Naive thymus-derived CD4-positive, alpha-beta T cell (primary cell): ENCODE measurements at regions of chr17 and their contacts with region 1.

Region 1: GRCh38 chr17:3668279-3669085 is at the starts of genes EMC6 and TAX1BP3:
- DNase-seq: peak; percentile 97 to 100 (median 100)
- ATAC-seq: peak; percentile 96
- H3K4me3 ChIP-seq: peak within 1 kb of the TSS; percentile 91
- H3K4me3 Mint-ChIP-seq: peak within 1 kb of the TSS; percentile 82 to 94 (median 91)
- H3K27ac ChIP-seq: peak within 1 kb of the TSS; percentile 76
- H3K27ac Mint-ChIP-seq: peak within 1 kb of the TSS; percentile 63 to 93 (median 85)
- H3K4me1 ChIP-seq: peaks cover 8 to 17% of the 10 kb centered on the region in 2 donors
- H3K4me1 Mint-ChIP-seq: peaks cover 21 to 43% (median 30%) of the 10 kb centered on the region in 7 donors
- H3K27me3 ChIP-seq: no peaks in the 10 kb centered on the region
- H3K27me3 Mint-ChIP-seq: peaks cover 0 to 2% (median 0%) of the 10 kb centered on the region in 5 donors
- total RNA-seq, gene EMC6: 23.1 to 39.0 (median 31.2) TPM
- total RNA-seq, gene TAX1BP3: 10.5 to 28.4 (median 11.7) TPM

Region 2: DNA sequence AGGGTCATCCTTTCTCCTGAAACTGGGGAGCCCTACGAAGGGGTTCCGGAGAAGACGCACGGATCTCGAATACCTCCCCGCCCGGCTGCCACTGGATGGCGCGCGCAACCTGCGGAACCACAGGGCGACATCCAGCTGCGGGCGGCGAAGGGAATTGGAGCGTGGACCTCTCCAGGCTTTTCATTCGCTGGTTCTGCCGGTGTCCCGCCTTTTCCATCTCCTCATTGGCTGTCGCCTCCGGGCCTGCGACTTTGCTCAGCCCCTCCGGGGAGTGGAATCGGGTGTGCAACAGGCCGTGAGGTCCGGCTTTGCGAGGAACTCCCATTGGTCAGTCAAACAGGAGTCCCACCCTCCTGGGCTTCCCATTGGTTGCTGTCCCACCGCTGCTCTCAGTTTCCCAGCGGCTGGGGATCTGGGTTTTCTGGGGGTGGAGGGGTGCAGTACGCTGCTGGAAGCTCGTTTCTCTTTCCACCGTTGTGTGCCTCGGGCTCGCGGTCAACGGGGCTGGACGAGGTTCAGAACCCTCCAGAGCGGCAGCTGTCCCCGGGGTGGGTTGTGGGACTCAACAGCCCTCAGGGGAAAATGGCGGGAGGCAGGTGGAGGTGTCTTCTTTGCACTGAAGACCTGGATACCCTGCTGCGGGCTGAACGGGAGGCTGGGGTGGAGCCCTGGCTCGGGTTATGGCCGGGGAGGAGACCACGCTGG is 619.6 kb before region 1 on chr17:
- CTCF ChIA-PET with region 1: no interaction called
- POLR2A ChIA-PET with region 1: no interaction called
- intact Hi-C with region 1: loop called in 1 of 2 experiments (anchors 5 kb)
- DNase-seq: peak; percentile 76 to 95 (median 91)
- ATAC-seq: peak; percentile 98
- H3K4me3 ChIP-seq: peak overlapping the region; percentile 83
- H3K4me3 Mint-ChIP-seq: peak overlapping the region; percentile 86 to 94 (median 92)
- H3K27ac ChIP-seq: peak overlapping the region; percentile 60
- H3K27ac Mint-ChIP-seq: peak overlapping the region; percentile 46 to 91 (median 86)
- H3K4me1 ChIP-seq: peaks cover 0 to 6% of the 10 kb centered on the region in 2 donors
- H3K4me1 Mint-ChIP-seq: peaks cover 0 to 15% (median 9%) of the 10 kb centered on the region in 7 donors
- H3K27me3 ChIP-seq: no peaks in the 10 kb centered on the region
- H3K27me3 Mint-ChIP-seq: peaks cover 0 to 6% (median 0%) of the 10 kb centered on the region in 5 donors

Region 3: DNA sequence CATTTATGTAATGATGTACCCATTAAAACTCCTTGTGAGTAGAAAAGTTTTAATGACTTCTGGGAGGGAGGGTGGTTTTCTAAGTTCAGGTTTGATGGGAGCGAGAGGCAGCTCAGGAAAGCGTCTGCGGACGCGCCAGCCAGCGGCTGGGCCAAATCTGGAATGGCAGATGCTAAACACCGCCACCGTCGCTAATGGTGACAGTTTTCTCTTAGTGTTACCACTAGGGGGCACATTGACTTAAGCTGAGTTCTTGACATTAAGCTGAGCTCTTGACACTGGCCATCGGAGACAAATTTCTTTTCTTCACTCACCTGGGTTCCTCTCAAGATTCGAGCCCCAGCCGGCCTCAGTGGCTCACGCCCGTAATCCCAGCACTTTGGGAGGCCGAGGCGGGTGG is 66.0 kb before region 1 on chr17:
- CTCF ChIA-PET with region 1: no interaction called
- POLR2A ChIA-PET with region 1: no interaction called
- intact Hi-C with region 1: no loop called
- DNase-seq: peak in 2 of 9 donors; percentile 5 to 7
- ATAC-seq: no peak
- H3K4me3 ChIP-seq: no peak overlapping the region
- H3K4me3 Mint-ChIP-seq: no peak overlapping the region
- H3K27ac ChIP-seq: no peak overlapping the region
- H3K27ac Mint-ChIP-seq: no peak overlapping the region
- H3K4me1 ChIP-seq: no peaks in the 10 kb centered on the region
- H3K4me1 Mint-ChIP-seq: peaks cover 0 to 1% (median 0%) of the 10 kb centered on the region in 7 donors
- H3K27me3 ChIP-seq: no peaks in the 10 kb centered on the region
- H3K27me3 Mint-ChIP-seq: no peaks in the 10 kb centered on the region

Region 4: GRCh38 chr17:3695723-3696411 is 27.4 kb after region 1 on chr17 and contains the start of gene P2RX5:
- CTCF ChIA-PET with region 1: no interaction called
- POLR2A ChIA-PET with region 1: interaction called, 3 read pairs
- intact Hi-C with region 1: loop called in 1 of 2 experiments (anchors 1 kb)
- DNase-seq: peak in 8 of 9 donors; percentile 24 to 59 (median 35)
- ATAC-seq: peak; percentile 71
- H3K4me3 ChIP-seq: peak within 1 kb of the TSS; percentile 82
- H3K4me3 Mint-ChIP-seq: peak within 1 kb of the TSS; percentile 87 to 98 (median 94)
- H3K27ac ChIP-seq: peak within 1 kb of the TSS; percentile 61
- H3K27ac Mint-ChIP-seq: peak within 1 kb of the TSS in 8 of 9 donors; percentile 67 to 95 (median 86)
- H3K4me1 ChIP-seq: peaks cover 3 to 9% of the 10 kb centered on the region in 2 donors
- H3K4me1 Mint-ChIP-seq: peaks cover 5 to 39% (median 16%) of the 10 kb centered on the region in 7 donors
- H3K27me3 ChIP-seq: no peaks in the 10 kb centered on the region
- H3K27me3 Mint-ChIP-seq: no peaks in the 10 kb centered on the region
- total RNA-seq, gene P2RX5: 10.7 to 94.5 (median 24.6) TPM

Region 5: GRCh38 chr17:3723556-3724369 is 55.3 kb after region 1 on chr17 and contains the start of gene HASPIN:
- CTCF ChIA-PET with region 1: no interaction called
- POLR2A ChIA-PET with region 1: interaction called, 6 read pairs
- intact Hi-C with region 1: loop called (anchors 1 to 5 kb)
- DNase-seq: peak; percentile 85 to 97 (median 92)
- ATAC-seq: peak; percentile 92
- H3K4me3 ChIP-seq: peak within 1 kb of the TSS; percentile 77
- H3K4me3 Mint-ChIP-seq: peak within 1 kb of the TSS; percentile 84 to 95 (median 92)
- H3K27ac ChIP-seq: peak within 1 kb of the TSS; percentile 83
- H3K27ac Mint-ChIP-seq: peak within 1 kb of the TSS; percentile 65 to 94 (median 86)
- H3K4me1 ChIP-seq: peaks cover 7 to 24% of the 10 kb centered on the region in 2 donors
- H3K4me1 Mint-ChIP-seq: peaks cover 21 to 55% (median 39%) of the 10 kb centered on the region in 7 donors
- H3K27me3 ChIP-seq: no peaks in the 10 kb centered on the region
- H3K27me3 Mint-ChIP-seq: no peaks in the 10 kb centered on the region
- total RNA-seq, gene HASPIN: 0.32 to 18.5 (median 0.35) TPM

Region 6: GRCh38 chr17:3893003-3893719 is 224.7 kb after region 1 on chr17 and contains the start of gene CAMKK1:
- CTCF ChIA-PET with region 1: no interaction called
- POLR2A ChIA-PET with region 1: no interaction called
- intact Hi-C with region 1: loop called in 1 of 2 experiments (anchors 5 kb)
- DNase-seq: peak; percentile 71 to 96 (median 85)
- ATAC-seq: peak; percentile 87
- H3K4me3 ChIP-seq: peak within 1 kb of the TSS; percentile 70
- H3K4me3 Mint-ChIP-seq: peak within 1 kb of the TSS; percentile 81 to 90 (median 86)
- H3K27ac ChIP-seq: peak within 1 kb of the TSS; percentile 77
- H3K27ac Mint-ChIP-seq: peak within 1 kb of the TSS; percentile 73 to 93 (median 88)
- H3K4me1 ChIP-seq: peaks cover 11 to 23% of the 10 kb centered on the region in 2 donors
- H3K4me1 Mint-ChIP-seq: peaks cover 23 to 45% (median 35%) of the 10 kb centered on the region in 7 donors
- H3K27me3 ChIP-seq: no peaks in the 10 kb centered on the region
- H3K27me3 Mint-ChIP-seq: peaks cover 0 to 7% (median 0%) of the 10 kb centered on the region in 5 donors
- total RNA-seq, gene CAMKK1: 4.8 to 12.5 (median 6.3) TPM